ENCODE measurements at regions of chr1 and their contacts with region 1.

Region 1: DNA sequence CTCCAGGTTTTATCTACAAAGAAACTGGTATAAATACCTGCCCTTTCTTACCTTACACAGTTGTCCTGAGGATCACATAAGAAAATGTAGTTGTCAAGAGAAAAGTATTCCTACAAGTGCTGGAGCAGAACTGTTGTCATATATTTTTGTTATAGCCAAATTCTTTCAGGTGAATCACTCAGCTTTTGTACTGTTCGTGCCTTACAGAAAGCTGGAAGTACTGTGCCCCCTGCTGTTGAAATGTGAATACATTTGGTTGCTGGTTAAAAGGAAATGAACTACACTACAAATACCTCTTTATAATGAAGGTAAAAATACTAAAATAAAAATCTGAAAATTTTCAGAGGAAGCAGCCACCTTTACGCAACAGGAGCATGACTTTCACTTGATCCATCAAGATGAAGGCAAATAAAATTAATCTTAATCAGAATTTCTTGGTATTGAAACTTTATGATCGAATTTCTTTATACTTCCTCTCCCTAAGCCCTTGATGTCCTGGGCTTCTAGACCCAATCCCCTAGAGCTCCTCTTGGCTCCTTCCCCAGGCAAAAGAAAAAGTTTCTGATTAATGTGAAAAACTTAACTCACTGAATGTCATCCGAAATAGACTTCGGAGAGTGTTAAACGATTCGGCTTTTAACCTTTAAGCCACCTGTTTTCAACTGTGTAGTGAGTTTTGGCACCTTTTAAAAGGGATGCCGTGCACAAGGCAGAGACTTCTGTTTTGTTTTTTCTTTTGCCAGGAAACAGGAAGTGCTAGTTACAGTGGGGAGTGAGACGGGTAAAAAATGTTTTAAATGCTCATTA is 12.5 kb downstream of the CHML start:
- DNase-seq: peak; percentile 36
- H3K4me3 Mint-ChIP-seq: peak overlapping the region; percentile 14
- H3K27ac Mint-ChIP-seq: peak overlapping the region; percentile 20
- H3K4me1 Mint-ChIP-seq: peaks cover 10% of the 10 kb centered on the region
- H3K27me3 Mint-ChIP-seq: no peaks in the 10 kb centered on the region

Region 2: DNA sequence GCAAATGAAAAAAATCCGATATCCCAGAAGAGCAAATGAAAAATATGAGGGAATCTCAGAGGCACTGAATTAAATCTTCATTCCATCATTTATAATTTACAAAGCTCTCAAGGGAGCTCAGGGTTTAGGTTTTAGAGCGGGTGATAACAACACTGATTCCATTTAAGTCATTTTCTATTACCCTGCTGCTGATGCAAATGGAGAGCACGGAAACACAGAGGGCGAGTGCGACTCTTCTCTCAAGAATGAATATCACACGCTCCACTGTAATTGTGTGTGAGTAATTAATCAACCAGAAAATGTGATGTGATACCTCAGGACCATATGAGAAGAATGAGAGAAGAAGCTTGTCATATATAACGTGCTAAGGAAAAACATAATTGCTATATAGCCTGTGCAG is 10.2 kb before region 1 on chr1:
- CTCF ChIA-PET with region 1: interaction called, 64 read pairs
- POLR2A ChIA-PET with region 1: no interaction called
- intact Hi-C with region 1: loop called (anchors 1 kb)
- DNase-seq: no peak
- H3K4me3 Mint-ChIP-seq: no peak overlapping the region
- H3K27ac Mint-ChIP-seq: no peak overlapping the region
- H3K4me1 Mint-ChIP-seq: peaks cover 12% of the 10 kb centered on the region
- H3K27me3 Mint-ChIP-seq: no peaks in the 10 kb centered on the region

Region 3: DNA sequence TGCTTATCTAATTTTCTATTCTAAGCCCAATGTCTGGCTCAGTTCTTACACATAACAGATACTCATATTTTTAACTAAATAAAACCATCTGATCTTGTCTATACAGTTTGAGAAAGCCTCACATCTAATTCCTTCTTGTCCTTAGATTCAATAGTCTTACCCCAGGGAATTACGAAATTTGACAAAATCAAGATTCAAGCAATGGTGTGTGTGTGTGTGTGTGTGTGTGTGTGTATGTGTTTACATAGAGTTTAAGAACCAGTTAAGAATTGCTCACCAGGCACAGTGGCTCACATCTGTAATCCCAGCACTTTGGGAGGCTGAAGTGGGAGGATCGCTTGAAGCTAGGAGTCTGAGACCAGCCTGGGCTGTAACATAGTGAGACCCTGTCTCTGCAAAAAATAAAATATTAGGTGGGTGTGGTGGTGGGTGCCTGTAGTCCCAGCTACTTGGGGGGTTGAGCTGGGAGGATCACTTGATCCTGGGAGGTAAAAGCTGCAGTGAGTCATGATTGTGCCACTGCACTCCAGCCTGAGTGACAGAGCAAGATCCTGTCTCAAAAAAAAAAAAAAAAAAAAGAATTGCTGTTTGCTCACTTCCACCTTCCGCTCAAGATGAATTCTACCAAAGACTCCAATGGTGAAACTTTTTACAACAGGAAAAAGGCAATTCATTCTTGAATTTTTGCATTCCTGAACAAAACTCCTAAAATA is 30.6 kb after region 1 on chr1:
- CTCF ChIA-PET with region 1: no interaction called
- POLR2A ChIA-PET with region 1: no interaction called
- intact Hi-C with region 1: no loop called
- DNase-seq: no peak
- H3K4me3 Mint-ChIP-seq: no peak overlapping the region
- H3K27ac Mint-ChIP-seq: no peak overlapping the region
- H3K4me1 Mint-ChIP-seq: no peaks in the 10 kb centered on the region
- H3K27me3 Mint-ChIP-seq: peaks cover 13% of the 10 kb centered on the region